CD14-positive monocyte (primary cell): ENCODE measurements at regions of chr17 and their contacts with region 1.

Region 1: GRCh38 chr17:64357191-64357981 is 33.3 kb downstream of the PECAM1 start:
- DNase-seq: peak in 2 of 3 donors; percentile 17 to 28
- H3K4me3 ChIP-seq: no peak overlapping the region
- H3K4me3 Mint-ChIP-seq: no peak overlapping the region
- H3K27ac ChIP-seq: peak overlapping the region in 1 of 2 donors; percentile 69
- H3K27ac Mint-ChIP-seq: peak overlapping the region; percentile 3 to 79 (median 47)
- H3K4me1 ChIP-seq: peaks cover 6 to 30% of the 10 kb centered on the region in 2 donors
- H3K4me1 Mint-ChIP-seq: peaks cover 28% of the 10 kb centered on the region
- H3K27me3 ChIP-seq: no peaks in the 10 kb centered on the region
- H3K27me3 Mint-ChIP-seq: no peaks in the 10 kb centered on the region
- CTCF ChIP-seq: no peak

Region 2: DNA sequence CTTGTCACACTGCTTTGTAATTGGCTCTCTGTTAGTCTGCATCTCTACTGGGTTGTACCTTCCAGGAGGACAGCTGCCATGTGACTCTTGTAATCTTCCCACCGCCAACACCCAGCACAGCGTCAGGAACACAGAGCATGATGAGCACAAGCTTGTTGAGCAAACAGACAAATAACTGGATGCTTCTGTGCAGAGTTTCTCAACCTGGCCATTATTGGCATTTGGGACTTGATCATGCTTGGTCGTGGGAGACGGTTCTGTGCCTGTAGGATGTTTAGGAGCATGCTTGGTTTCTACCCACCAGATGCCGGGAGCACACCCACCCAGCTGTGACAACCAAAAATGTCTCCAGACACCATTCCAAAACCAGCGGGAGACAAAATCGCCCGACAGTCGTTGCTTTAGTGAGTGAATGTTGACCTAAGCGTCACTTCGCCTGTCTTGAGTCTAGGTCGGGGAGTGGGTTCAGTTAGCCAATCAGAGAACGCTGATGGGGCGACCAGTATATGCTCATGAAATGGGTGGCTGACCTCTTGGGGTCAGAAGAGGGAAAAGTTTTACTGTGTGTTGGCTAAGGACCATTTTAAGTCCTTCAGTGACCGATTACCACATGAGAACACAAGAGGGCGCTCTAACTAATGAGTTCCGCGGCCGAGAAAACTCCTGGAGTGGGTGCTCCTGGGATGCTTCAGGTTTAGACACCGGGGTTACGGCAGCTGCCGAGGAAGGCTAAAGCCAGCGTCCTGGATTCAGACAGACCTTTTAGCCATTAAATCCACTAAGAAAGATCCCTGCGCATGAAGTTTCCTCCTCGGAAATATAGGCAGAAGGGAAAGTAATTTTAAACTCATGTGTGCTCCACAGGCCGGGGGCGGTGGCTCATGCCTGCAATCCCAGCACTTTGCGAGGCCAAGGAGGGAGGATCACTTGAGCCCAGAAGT is 36.5 kb before region 1 on chr17:
- intact Hi-C with region 1: loop called (anchors 5 kb)
- DNase-seq: peak; percentile 61 to 83 (median 72)
- H3K4me3 ChIP-seq: no peak overlapping the region
- H3K4me3 Mint-ChIP-seq: peak overlapping the region; percentile 51 to 58
- H3K27ac ChIP-seq: peak overlapping the region in 1 of 2 donors; percentile 52
- H3K27ac Mint-ChIP-seq: peak overlapping the region; percentile 51 to 83 (median 76)
- H3K4me1 ChIP-seq: peaks cover 22 to 59% of the 10 kb centered on the region in 2 donors
- H3K4me1 Mint-ChIP-seq: peaks cover 47% of the 10 kb centered on the region
- H3K27me3 ChIP-seq: no peaks in the 10 kb centered on the region
- H3K27me3 Mint-ChIP-seq: peaks cover 0 to 4% (median 3%) of the 10 kb centered on the region in 3 donors
- CTCF ChIP-seq: peak; percentile 91